Prostate gland (tissue), 2 donors: ENCODE measurements at regions of chr14 and their contacts with region 1.

Region 1: DNA sequence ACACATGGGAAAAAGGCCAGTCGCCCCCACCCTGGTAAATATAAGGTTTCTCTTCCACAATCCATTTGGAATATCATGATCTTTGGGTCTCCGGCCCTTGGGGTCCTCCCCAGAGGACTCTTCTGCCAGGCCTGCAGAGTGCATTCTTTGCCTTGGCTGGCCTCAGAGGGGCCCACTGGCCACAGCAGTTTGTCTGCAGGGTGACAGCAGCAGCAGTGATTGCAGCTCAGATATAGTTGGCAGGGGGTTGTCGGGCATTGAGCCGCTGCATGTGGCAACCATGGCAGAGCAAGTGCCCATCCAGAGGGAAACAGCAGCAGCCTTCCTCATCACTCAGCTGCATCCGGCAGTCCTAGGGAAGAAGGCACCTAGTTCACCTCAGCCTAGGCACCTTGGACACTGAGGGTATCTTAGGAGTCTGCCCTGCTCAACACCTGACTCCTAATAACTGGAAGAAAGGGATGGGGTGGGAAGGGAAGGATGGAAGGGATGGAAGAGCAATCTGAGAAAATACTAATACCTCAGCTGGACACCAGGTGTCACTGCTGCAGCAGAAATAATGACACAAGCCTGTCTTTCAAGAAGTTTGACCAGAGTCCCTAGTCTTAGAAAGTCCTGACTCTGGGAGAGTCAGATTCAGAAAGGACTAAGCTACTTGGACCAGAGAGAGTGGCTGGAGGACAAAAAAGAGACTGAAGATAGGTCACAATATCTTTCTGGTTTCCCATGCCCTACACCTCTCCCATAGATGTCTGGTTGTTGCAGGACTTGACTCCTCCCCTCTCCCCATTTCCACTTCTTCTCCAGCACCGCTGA is 8.9 kb downstream of the AJUBA start:
- DNase-seq: peak; percentile 58
- H3K4me3 ChIP-seq: no peak overlapping the region
- H3K27ac ChIP-seq: no peak overlapping the region
- H3K4me1 ChIP-seq: peaks cover 4% of the 10 kb centered on the region
- H3K27me3 ChIP-seq: no peaks in the 10 kb centered on the region
- CTCF ChIP-seq: peak; percentile 46 to 86 (median 76)
- POLR2A ChIP-seq: no peak

Region 2: DNA sequence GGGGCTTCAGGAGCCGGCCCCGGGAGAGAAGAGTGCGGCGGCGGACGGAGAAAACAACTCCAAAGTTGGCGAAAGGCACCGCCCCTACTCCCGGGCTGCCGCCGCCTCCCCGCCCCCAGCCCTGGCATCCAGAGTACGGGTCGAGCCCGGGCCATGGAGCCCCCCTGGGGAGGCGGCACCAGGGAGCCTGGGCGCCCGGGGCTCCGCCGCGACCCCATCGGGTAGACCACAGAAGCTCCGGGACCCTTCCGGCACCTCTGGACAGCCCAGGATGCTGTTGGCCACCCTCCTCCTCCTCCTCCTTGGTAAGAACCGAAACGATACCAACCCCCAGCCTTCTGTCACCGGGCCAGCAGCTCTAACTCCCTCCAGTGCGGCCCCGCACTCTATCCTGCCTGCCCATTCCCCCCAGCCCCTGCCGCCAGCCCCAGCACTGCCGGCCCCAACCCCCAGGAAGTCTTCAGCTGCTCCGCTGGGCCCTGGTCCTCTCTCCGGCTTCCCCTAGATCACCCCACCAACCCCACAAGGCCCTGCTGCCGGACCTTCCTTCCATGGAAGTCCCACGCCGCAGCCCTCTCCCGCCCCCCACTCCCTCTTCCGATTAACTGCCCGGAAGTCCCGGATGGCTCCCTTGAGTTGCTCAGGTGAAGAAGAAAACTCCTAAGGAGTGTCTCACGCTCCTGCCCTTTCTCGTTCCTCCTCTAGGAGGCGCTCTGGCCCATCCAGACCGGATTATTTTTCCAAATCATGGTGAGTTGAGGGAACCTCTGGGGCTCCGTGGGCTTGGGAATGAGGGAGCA is 101.2 kb before region 1 on chr14:
- intact Hi-C with region 1: loop called (anchors 5 kb)
- DNase-seq: peak; percentile 89
- H3K4me3 ChIP-seq: peak overlapping the region; percentile 94 to 100
- H3K27ac ChIP-seq: peak overlapping the region; percentile 100
- H3K4me1 ChIP-seq: peaks cover 4% of the 10 kb centered on the region
- H3K27me3 ChIP-seq: no peaks in the 10 kb centered on the region
- CTCF ChIP-seq: peak; percentile 93 to 98 (median 97)
- POLR2A ChIP-seq: peak; percentile 56

Region 3: GRCh38 chr14:22955702-22956569 is 17.5 kb before region 1 on chr14:
- intact Hi-C with region 1: loop called (anchors 1 kb)
- DNase-seq: no peak
- H3K4me3 ChIP-seq: peak overlapping the region; percentile 59 to 60
- H3K27ac ChIP-seq: peak overlapping the region; percentile 95 to 96
- H3K4me1 ChIP-seq: no peaks in the 10 kb centered on the region
- H3K27me3 ChIP-seq: no peaks in the 10 kb centered on the region
- CTCF ChIP-seq: no peak
- POLR2A ChIP-seq: no peak

Region 4: GRCh38 chr14:22986508-22987054 is 13.2 kb after region 1 on chr14:
- intact Hi-C with region 1: loop called (anchors 1 kb)
- DNase-seq: peak; percentile 92
- H3K4me3 ChIP-seq: no peak overlapping the region
- H3K27ac ChIP-seq: no peak overlapping the region
- H3K4me1 ChIP-seq: no peaks in the 10 kb centered on the region
- H3K27me3 ChIP-seq: no peaks in the 10 kb centered on the region
- CTCF ChIP-seq: peak; percentile 70 to 96 (median 93)
- POLR2A ChIP-seq: no peak